Activated T-helper 2 cell treated with anti-CD3 and anti-CD28 coated beads, Interferon-gamma antibody, Interleukin-2, Interleukin-4, amounts not matched to agents 10 μg/mL and 5 μg/mL and 100 μg/mL, durations not matched to agents 14 hours and 24 hours and 36 hours (primary cell): ENCODE measurements at regions of chr1 and their contacts with region 1.

Region 1: GRCh38 chr1:115807723-115808122 is 33.2 kb downstream of the NHLH2 start:
- DNase-seq: no peak
- H3K4me3 Mint-ChIP-seq: no peak overlapping the region
- H3K27ac Mint-ChIP-seq: no peak overlapping the region
- H3K4me1 Mint-ChIP-seq: no peaks in the 10 kb centered on the region
- H3K27me3 Mint-ChIP-seq: peaks cover 5% of the 10 kb centered on the region

Region 2: GRCh38 chr1:115781343-115781742 is 26.4 kb before region 1 on chr1:
- intact Hi-C with region 1: no loop called
- DNase-seq: no peak
- H3K4me3 Mint-ChIP-seq: no peak overlapping the region
- H3K27ac Mint-ChIP-seq: no peak overlapping the region
- H3K4me1 Mint-ChIP-seq: no peaks in the 10 kb centered on the region
- H3K27me3 Mint-ChIP-seq: peaks cover 2% of the 10 kb centered on the region

Region 3: GRCh38 chr1:115791813-115792212 is 15.9 kb before region 1 on chr1:
- intact Hi-C with region 1: no loop called
- DNase-seq: no peak
- H3K4me3 Mint-ChIP-seq: no peak overlapping the region
- H3K27ac Mint-ChIP-seq: no peak overlapping the region
- H3K4me1 Mint-ChIP-seq: no peaks in the 10 kb centered on the region
- H3K27me3 Mint-ChIP-seq: peaks cover 12% of the 10 kb centered on the region

Region 4: GRCh38 chr1:115980998-115981993 is 173.6 kb after region 1 on chr1:
- intact Hi-C with region 1: loop called (anchors 2 kb)
- DNase-seq: no peak
- H3K4me3 Mint-ChIP-seq: no peak overlapping the region
- H3K27ac Mint-ChIP-seq: no peak overlapping the region
- H3K4me1 Mint-ChIP-seq: peaks cover 6% of the 10 kb centered on the region
- H3K27me3 Mint-ChIP-seq: peaks cover 31% of the 10 kb centered on the region